Gastrocnemius medialis (tissue), 4 donors: ENCODE measurements at regions of chr20 and their contacts with region 1.

Region 1: DNA sequence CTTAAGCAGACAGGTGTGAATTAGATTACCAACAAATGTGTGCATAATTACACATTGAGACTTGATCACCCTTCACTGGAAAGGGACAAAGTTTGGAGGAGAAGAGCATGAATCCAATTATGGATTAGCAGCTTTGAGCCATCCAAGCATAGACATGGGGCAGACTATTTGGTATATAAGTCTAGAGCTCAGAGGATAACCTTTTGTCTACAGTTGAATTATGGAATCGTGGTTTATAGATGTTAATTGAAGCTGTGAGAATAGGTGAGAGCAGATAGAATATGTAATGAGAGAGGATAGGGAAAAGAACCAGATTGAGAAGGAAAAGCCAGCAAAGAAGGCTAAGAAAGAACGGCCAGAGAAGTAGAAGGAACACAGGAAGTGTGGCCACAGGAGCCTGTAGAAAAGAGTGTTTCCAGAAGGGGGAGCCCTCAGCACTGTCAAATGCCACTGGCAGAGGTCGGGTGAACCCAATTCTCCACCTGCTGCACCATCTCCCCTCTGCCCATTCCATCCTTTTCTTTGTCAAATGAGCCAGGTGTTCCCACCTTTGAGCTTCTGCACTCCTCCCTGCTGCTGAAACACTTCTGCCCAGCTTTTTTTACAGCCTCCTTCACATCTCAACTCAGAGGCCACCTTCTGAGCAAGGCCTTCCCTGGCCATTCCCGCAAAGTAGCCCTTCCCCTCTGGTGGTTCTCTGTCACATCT is 7.3 kb downstream of the DNTTIP1 start:
- DNase-seq: peak; percentile 51 to 67
- ATAC-seq: peak; percentile 34 to 56
- H3K4me3 ChIP-seq: no peak overlapping the region
- H3K27ac ChIP-seq: peak overlapping the region; percentile 73 to 80 (median 76)
- H3K4me1 ChIP-seq: peaks cover 28 to 32% of the 10 kb centered on the region in 2 donors
- H3K27me3 ChIP-seq: no peaks in the 10 kb centered on the region
- CTCF ChIP-seq: peak; percentile 53 to 70 (median 64)
- POLR2A ChIP-seq: no peak

Region 2: DNA sequence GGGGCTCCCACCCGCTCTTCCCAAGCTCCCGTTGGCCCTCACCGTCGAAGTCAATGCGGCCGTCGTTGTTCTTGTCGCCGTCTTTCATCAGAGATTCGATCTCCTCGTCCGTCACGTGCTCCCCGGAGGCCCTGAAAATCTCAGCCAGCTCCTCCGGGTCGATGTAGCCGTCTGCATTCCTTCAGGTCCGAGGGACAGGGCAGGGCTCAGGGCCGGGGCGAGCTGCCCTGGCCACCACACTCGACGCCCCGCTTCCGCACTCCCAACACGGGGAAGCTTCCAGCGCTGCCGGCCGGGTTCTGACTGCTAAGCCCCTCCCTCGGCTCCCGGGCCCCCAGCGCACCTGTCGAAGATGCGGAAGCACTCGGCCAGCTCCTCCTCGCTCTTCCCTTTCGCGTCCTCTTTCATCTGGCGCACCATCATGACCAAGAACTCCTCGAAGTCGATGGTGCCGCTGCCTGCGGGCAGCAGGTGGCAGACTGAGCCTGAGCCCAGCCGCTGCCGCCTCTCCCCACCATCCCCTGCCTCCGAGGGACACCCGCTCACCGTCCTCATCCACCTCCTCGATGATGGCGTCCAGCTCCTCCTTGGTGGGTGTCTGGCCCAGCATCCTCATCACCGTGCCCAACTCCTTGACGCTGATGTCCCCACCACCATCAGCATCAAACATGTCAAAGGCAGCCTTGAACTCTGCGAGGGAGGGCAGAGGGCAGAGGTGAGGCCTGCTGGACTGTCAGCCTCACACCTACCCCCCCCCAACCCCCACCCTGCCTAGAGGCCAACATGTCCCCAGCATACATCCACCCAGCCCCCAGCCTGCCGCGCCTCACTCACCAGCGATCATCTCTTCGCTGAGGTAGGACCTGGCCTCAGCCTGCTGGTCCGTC is 25.1 kb after region 1 on chr20:
- in situ Hi-C with region 1: no loop called
- intact Hi-C with region 1: loop called (anchors 2 kb)
- DNase-seq: peak; percentile 50 to 74
- ATAC-seq: peak in 1 of 2 donors; percentile 9
- H3K4me3 ChIP-seq: peak overlapping the region; percentile 27 to 63 (median 46)
- H3K27ac ChIP-seq: peak overlapping the region; percentile 95 to 97 (median 96)
- H3K4me1 ChIP-seq: peaks cover 55 to 60% of the 10 kb centered on the region in 2 donors
- H3K27me3 ChIP-seq: no peaks in the 10 kb centered on the region
- CTCF ChIP-seq: peak; percentile 23 to 68 (median 59)
- POLR2A ChIP-seq: no peak

Region 3: DNA sequence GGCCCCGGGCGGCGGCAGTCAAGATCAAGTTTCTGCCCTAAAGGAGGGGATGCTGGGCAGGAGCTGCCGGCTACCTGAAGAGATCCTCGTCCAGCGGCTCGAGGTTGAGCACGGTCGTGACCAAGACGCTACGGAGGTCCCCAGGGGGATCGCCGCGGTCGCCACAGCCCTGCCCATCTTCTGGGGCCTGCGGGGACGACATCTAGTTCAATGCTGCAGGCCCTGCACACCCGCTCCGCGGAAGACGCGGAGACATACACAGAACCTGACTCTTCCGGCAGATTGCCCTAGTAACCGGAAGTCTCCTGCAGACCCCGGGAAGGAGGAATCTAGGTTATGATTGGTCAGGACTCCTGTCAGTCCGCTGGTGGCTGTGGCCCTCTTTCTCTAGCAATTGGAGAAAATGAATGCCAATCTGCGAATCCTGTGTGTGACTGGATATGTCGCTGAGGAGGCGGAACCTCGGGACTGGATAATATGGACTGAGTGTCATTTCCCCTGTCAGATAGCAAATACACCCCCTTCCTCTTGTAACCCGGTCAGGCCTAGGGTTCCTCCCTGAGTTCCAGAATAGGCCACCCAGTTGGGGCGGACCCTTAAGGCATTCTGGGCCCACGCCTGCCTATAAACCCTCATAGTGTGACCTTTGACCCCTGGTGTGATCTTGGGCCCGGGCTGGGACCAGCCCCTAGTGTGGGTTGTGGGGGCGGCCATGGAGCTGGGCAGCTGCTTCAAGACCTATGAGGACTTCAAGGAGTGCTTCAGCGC is 58.2 kb after region 1 on chr20 and contains the starts of genes ACOT8 and ZSWIM3:
- in situ Hi-C with region 1: no loop called
- intact Hi-C with region 1: loop called (anchors 2 kb)
- DNase-seq: peak; percentile 98 to 99
- ATAC-seq: peak; percentile 99 to 100
- H3K4me3 ChIP-seq: peak within 1 kb of the TSS; percentile 83 to 88 (median 86)
- H3K27ac ChIP-seq: peak within 1 kb of the TSS; percentile 82 to 93 (median 87)
- H3K4me1 ChIP-seq: peaks cover 38 to 39% of the 10 kb centered on the region in 2 donors
- H3K27me3 ChIP-seq: no peaks in the 10 kb centered on the region
- CTCF ChIP-seq: no peak
- POLR2A ChIP-seq: peak; percentile 69 to 76
- total RNA-seq, gene ACOT8: 32.3 to 66.2 (median 41.4) TPM
- total RNA-seq, gene ZSWIM3: 1.3 to 3.3 (median 2.1) TPM

Region 4: DNA sequence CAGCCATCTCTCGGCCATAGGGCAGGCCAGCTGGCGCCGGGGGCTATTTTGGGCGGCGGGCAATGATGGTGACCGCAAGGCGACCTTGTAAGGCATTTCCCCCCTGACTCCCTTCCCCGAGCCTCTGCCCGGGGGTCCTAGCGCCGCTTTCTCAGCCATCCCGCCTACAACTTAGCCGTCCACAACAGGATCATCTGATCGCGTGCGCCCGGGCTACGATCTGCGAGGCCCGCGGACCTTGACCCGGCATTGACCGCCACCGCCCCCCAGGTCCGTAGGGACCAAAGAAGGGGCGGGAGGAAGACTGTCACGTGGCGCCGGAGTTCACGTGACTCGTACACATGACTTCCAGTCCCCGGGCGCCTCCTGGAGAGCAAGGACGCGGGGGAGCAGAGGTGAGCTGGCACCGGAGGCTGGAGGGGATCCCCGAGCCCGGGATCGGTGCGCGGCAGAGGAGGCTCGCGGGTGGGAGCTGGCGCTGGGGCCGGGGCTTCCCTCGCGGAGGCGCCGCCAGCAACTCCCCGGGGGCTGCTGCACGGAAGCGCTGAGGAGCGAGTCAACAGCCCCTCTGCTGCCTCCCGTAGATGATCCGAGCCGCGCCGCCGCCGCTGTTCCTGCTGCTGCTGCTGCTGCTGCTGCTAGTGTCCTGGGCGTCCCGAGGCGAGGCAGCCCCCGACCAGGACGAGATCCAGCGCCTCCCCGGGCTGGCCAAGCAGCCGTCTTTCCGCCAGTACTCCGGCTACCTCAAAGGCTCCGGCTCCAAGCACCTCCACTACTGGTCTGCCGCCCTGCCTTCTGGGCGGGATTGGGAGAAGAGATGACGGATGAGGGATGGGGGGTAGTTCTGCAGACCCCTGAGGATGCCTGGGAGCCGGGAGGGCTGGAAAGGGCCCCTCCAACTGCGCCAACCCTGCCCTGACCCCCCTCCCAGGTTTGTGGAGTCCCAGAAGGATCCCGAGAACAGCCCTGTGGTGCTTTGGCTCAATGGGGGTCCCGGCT is 92.2 kb after region 1 on chr20 and contains the starts of genes CTSA and NEURL2:
- in situ Hi-C with region 1: loop called in 1 of 4 experiments (anchors 10 kb)
- intact Hi-C with region 1: loop called (anchors 1 kb)
- DNase-seq: peak; percentile 90 to 93
- ATAC-seq: peak; percentile 89 to 91
- H3K4me3 ChIP-seq: peak within 1 kb of the TSS; percentile 76 to 96 (median 88)
- H3K27ac ChIP-seq: peak within 1 kb of the TSS; percentile 87 to 98 (median 96)
- H3K4me1 ChIP-seq: peaks cover 22 to 26% of the 10 kb centered on the region in 2 donors
- H3K27me3 ChIP-seq: no peaks in the 10 kb centered on the region
- CTCF ChIP-seq: peak in 3 of 5 experiments; percentile 16 to 27 (median 17)
- POLR2A ChIP-seq: peak; percentile 48 to 59
- total RNA-seq, gene CTSA: 21.9 to 59.2 (median 46.2) TPM
- total RNA-seq, gene NEURL2: 4.9 to 24.1 (median 10.2) TPM